ENCODE measurements at regions of chr7 and their contacts with region 1.

Region 1: DNA sequence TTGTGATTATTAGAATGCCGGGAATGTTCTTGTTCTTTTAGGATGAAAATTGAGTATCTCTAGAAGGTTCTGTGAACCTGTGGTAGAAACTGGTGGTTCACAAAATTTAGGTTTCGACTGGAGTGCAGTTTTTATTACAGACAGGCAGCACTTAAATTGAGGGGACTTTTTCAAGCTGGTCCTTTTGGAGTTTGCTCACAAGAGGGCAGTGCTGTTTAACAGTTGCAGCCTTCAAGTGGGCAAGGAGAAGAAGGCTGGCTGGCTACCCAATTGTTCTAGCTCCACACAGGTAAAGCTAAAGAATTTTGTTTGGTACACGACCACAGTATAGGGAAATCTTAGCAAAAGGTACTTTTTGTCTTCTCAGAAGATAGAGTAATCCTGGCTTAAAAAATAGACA is 233.6 kb downstream of the SNX13 start:
- DNase-seq: peak; percentile 65
- H3K4me3 ChIP-seq: no peak overlapping the region
- H3K27ac ChIP-seq: no peak overlapping the region
- H3K4me1 ChIP-seq: no peaks in the 10 kb centered on the region
- H3K27me3 ChIP-seq: no peaks in the 10 kb centered on the region
- CTCF ChIP-seq: peak; percentile 57 to 82

Region 2: DNA sequence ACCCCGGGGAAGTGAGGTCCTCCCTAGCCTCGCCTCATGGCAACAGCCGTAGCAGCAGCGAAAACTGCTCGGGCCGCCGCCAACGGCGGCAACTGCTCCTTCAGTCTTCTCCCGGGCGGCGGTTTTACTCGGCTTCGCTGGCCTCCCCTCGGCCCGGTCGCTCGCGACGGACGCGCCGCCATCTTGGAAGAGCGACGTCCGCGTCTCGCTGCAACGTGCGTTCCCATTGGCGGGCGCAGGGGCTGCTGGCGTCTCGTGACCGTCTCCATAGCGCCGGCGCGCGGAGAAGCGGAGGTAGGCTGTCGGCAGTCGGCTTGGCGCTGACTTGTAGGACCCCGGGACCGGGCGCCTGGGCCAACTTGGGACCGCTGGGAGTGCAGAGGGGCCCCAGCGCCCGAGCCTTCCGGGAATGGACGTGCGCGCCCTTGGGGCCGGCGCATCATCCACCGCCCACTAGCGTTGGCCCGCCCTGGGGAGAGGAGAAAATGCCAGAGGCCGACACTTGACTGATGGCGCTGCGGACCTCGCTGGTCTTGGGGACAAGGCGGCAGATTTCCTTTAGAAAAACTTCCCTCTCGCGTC is 233.7 kb after region 1 on chr7 and contains the start of gene SNX13:
- CTCF ChIA-PET with region 1: no interaction called
- dilution Hi-C with region 1: no loop called
- in situ Hi-C with region 1: no loop called
- intact Hi-C with region 1: loop called (anchors 5 kb)
- DNase-seq: peak; percentile 86
- H3K4me3 ChIP-seq: peak within 1 kb of the TSS; percentile 62 to 77 (median 74)
- H3K27ac ChIP-seq: peak within 1 kb of the TSS; percentile 77
- H3K4me1 ChIP-seq: peaks cover 8% of the 10 kb centered on the region
- H3K27me3 ChIP-seq: no peaks in the 10 kb centered on the region
- CTCF ChIP-seq: peak in 1 of 2 donors; percentile 33
- total RNA-seq, gene SNX13: 35.5 to 62.8 TPM

Region 3: GRCh38 chr7:17991866-17992648 is 285.3 kb after region 1 on chr7:
- CTCF ChIA-PET with region 1: no interaction called
- dilution Hi-C with region 1: no loop called
- in situ Hi-C with region 1: no loop called
- intact Hi-C with region 1: loop called (anchors 5 kb)
- DNase-seq: no peak
- H3K4me3 ChIP-seq: no peak overlapping the region
- H3K27ac ChIP-seq: no peak overlapping the region
- H3K4me1 ChIP-seq: no peaks in the 10 kb centered on the region
- H3K27me3 ChIP-seq: no peaks in the 10 kb centered on the region
- CTCF ChIP-seq: peak; percentile 23 to 44

Region 4: GRCh38 chr7:18119985-18120384 is 413.3 kb after region 1 on chr7:
- CTCF ChIA-PET with region 1: no interaction called
- dilution Hi-C with region 1: no loop called
- in situ Hi-C with region 1: no loop called
- intact Hi-C with region 1: loop called (anchors 5 kb)
- DNase-seq: no peak
- H3K4me3 ChIP-seq: no peak overlapping the region
- H3K27ac ChIP-seq: no peak overlapping the region
- H3K4me1 ChIP-seq: no peaks in the 10 kb centered on the region
- H3K27me3 ChIP-seq: no peaks in the 10 kb centered on the region
- CTCF ChIP-seq: peak; percentile 21 to 44

Measured in mammary epithelial cell (primary cell).